HAP-1 (cell line): ENCODE measurements at regions of chr12 and their contacts with region 1.

Region 1: GRCh38 chr12:26028953-26029735 is 70.7 kb downstream of the RASSF8 start:
- DNase-seq: peak; percentile 31 to 59
- H3K4me3 ChIP-seq: no peak overlapping the region
- H3K4me1 ChIP-seq: peaks cover 2% of the 10 kb centered on the region; the same call in 1 of the 2 replicates
- H3K27me3 ChIP-seq: no peaks in the 10 kb centered on the region

Region 2: DNA sequence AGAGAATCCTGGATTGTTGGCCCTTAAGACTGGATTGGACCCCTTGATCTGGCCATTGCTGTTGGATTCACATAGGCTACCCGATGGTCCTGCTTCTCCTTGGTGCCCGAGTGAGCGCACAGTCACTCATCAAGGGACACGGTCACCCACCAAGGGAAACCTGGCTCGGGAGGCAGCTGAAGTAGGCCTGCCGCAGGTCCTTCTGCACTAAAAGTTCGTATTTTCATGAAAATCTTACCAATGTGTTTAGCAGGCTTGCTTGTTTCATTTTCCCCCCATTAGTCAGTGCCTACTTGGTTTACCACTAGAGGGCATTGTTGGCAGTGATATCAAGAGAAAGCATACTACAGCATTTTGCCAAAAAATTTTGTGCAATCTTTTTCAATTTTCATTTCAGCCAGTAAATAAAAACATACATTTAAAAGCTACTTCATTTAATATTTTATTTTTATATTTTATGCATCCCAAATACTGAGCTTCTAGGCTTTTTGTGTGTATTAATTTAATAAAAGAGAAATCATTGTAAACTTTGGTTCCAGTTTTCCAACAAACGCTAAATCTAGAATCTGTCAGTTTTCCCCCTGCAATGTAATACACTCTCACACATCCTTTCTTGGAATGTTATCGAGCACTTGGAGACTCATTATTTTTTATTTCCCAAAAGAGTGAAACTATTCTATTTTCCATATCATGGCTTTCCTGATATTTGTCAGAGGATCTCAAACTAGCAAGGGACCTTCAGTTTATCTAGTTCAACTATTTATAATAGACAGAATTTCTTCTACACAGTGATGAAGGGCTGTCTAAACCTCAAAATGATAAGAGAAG is 592.7 kb before region 1 on chr12:
- in situ Hi-C with region 1: loop called (anchors 10 kb)
- DNase-seq: peak; percentile 52 to 57
- H3K4me3 ChIP-seq: no peak overlapping the region
- H3K4me1 ChIP-seq: no peaks in the 10 kb centered on the region
- H3K27me3 ChIP-seq: no peaks in the 10 kb centered on the region

Region 3: DNA sequence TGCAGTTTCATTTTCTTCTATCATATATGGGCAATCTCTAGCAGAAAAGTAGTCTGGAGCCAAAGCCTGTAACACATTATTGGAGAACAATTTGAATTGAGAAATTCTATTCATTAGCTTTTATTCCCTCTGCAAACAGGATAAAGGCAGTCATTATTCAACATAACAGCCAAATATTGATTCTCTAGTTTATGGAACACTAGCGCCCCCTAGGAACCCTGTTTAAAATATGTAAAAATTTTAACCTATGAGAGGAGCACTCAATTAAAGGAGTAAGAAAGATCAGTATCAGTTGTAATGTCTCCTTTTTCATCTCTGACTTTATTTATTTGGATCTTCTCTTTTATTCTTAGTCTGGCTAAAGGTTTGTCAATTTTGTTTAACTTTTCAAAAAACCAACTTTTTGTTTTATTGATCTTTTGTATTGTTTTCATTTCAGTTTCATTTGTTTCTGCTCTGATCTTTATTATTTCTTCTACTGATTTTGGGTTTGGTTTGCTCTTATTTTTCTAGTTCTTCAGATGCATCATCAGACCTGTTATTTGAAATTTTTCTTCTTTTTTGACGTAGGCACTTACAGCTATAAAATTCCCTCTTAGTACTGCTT is 471.2 kb before region 1 on chr12:
- in situ Hi-C with region 1: loop called (anchors 25 kb)
- DNase-seq: peak; percentile 41 to 73
- H3K4me3 ChIP-seq: no peak overlapping the region
- H3K4me1 ChIP-seq: no peaks in the 10 kb centered on the region
- H3K27me3 ChIP-seq: no peaks in the 10 kb centered on the region

Region 4: GRCh38 chr12:26188127-26188526 is 159.0 kb after region 1 on chr12:
- in situ Hi-C with region 1: no loop called
- DNase-seq: no peak
- H3K4me3 ChIP-seq: no peak overlapping the region
- H3K4me1 ChIP-seq: no peaks in the 10 kb centered on the region
- H3K27me3 ChIP-seq: peaks cover 7% of the 10 kb centered on the region; the same call in 1 of the 2 replicates